Activated T-helper 2 cell treated with anti-CD3 and anti-CD28 coated beads, Interferon-gamma antibody, Interleukin-2, Interleukin-4, amounts not matched to agents 10 μg/mL and 5 μg/mL and 100 μg/mL, durations not matched to agents 14 hours and 24 hours and 36 hours (primary cell): ENCODE measurements at regions of chr6 and their contacts with region 1.

Region 1: GRCh38 chr6:151323791-151324487 is 67.4 kb downstream of the ZBTB2 start:
- DNase-seq: peak; percentile 55
- H3K4me3 Mint-ChIP-seq: peak overlapping the region; percentile 23
- H3K27ac Mint-ChIP-seq: no peak overlapping the region
- H3K4me1 Mint-ChIP-seq: peaks cover 27% of the 10 kb centered on the region
- H3K27me3 Mint-ChIP-seq: peaks cover 31% of the 10 kb centered on the region

Region 2: DNA sequence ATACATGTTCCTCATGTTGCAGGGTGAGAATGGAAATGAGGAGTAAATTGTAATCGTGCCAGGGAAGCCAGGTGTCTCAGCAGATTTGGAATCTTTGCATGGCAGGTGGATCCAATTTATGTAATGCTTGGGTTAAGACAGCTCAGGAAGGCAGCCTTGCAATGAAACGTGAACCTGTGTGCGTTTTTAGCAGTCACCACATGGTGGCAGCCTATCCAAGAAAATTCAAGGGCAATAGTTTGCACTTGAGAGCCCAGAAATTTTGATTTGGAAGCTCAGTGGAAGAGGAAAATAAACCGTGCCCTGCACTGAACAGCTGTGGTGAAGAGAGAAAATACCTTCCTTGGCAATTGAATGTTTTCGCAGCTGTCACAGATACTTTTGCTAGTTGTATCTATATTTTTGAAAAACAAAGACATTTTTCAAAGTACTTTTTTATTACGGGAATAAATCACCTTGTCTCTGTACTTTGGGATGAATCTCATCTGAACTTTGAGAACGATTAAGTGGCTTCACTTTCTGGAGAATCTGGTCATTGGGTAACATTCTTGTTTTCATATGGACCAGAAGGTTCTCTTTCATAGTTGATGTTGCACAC is 432.0 kb before region 1 on chr6:
- intact Hi-C with region 1: loop called (anchors 2 kb)
- DNase-seq: peak; percentile 43
- H3K4me3 Mint-ChIP-seq: no peak overlapping the region
- H3K27ac Mint-ChIP-seq: no peak overlapping the region
- H3K4me1 Mint-ChIP-seq: peaks cover 25% of the 10 kb centered on the region
- H3K27me3 Mint-ChIP-seq: no peaks in the 10 kb centered on the region

Region 3: GRCh38 chr6:151014404-151015100 is 309.4 kb before region 1 on chr6:
- intact Hi-C with region 1: loop called (anchors 1 kb)
- DNase-seq: peak; percentile 51
- H3K4me3 Mint-ChIP-seq: no peak overlapping the region
- H3K27ac Mint-ChIP-seq: no peak overlapping the region
- H3K4me1 Mint-ChIP-seq: peaks cover 4% of the 10 kb centered on the region
- H3K27me3 Mint-ChIP-seq: no peaks in the 10 kb centered on the region

Region 4: DNA sequence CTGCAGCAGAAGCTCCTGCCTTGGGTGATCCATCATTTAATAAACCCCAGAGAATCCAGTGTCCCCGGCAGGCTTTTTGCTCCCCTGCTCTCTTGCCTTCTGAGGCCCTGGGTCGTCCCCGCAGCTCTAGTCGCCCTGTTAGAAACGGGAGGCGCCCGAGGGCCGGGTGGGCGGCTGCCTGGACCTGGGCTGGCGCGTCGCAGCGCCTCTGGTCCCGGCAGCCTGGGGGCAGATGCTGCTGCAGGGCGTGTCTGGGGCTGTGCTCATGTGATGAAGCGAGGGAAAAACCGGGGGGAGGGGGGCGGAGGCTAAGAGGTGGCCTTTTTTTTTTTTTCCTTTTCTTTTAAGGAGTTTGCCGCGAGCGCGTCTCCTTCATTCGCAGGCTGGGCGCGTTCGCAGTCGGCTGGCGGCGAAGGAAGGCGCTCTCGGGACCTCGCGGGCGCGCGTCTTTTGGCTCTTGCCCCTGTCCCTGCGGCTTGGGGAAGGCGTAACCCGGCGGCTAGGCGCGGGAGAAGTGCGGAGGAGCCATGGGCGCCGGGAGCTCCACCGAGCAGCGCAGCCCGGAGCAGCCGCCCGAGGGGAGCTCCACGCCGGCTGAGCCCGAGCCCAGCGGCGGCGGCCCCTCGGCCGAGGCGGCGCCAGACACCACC is 83.8 kb before region 1 on chr6:
- intact Hi-C with region 1: loop called (anchors 5 kb)
- DNase-seq: peak; percentile 28
- H3K4me3 Mint-ChIP-seq: peak overlapping the region; percentile 93
- H3K27ac Mint-ChIP-seq: peak overlapping the region; percentile 86
- H3K4me1 Mint-ChIP-seq: peaks cover 18% of the 10 kb centered on the region
- H3K27me3 Mint-ChIP-seq: peaks cover 57% of the 10 kb centered on the region

Region 5: DNA sequence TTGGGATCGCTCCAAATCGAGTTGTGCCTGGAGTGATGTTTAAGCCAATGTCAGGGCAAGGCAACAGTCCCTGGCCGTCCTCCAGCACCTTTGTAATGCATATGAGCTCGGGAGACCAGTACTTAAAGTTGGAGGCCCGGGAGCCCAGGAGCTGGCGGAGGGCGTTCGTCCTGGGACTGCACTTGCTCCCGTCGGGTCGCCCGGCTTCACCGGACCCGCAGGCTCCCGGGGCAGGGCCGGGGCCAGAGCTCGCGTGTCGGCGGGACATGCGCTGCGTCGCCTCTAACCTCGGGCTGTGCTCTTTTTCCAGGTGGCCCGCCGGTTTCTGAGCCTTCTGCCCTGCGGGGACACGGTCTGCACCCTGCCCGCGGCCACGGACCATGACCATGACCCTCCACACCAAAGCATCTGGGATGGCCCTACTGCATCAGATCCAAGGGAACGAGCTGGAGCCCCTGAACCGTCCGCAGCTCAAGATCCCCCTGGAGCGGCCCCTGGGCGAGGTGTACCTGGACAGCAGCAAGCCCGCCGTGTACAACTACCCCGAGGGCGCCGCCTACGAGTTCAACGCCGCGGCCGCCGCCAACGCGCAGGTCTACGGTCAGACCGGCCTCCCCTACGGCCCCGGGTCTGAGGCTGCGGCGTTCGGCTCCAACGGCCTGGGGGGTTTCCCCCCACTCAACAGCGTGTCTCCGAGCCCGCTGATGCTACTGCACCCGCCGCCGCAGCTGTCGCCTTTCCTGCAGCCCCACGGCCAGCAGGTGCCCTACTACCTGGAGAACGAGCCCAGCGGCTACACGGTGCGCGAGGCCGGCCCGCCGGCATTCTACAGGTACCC is 483.8 kb after region 1 on chr6 and contains the start of gene ESR1:
- intact Hi-C with region 1: no loop called
- DNase-seq: no peak
- H3K4me3 Mint-ChIP-seq: peak within 1 kb of the TSS; percentile 24
- H3K27ac Mint-ChIP-seq: no peak within 1 kb of the TSS
- H3K4me1 Mint-ChIP-seq: peaks cover 6% of the 10 kb centered on the region
- H3K27me3 Mint-ChIP-seq: peaks cover 72% of the 10 kb centered on the region
- total RNA-seq, gene ESR1: not detected in 2 replicates